ENCODE measurements at regions of chr20 and their contacts with region 1.

Region 1: GRCh38 chr20:58901488-58902402 is 49.2 kb downstream of the GNAS start:
- DNase-seq: no peak
- ATAC-seq: no peak
- H3K4me3 ChIP-seq: no peak overlapping the region
- H3K27ac ChIP-seq: no peak overlapping the region
- H3K4me1 ChIP-seq: peaks cover 16% of the 10 kb centered on the region
- H3K27me3 ChIP-seq: no peaks in the 10 kb centered on the region
- CTCF ChIP-seq: no peak
- POLR2A ChIP-seq: no peak
- RAD21 ChIP-seq: no peak

Region 2: GRCh38 chr20:58890518-58891085 is 11.1 kb before region 1 on chr20:
- CTCF ChIA-PET with region 1: no interaction called
- POLR2A ChIA-PET with region 1: no interaction called
- dilution Hi-C with region 1: no loop called
- in situ Hi-C with region 1: no loop called
- intact Hi-C with region 1: loop called (anchors 1 kb)
- DNase-seq: peak; percentile 77
- ATAC-seq: peak; percentile 64
- H3K4me3 ChIP-seq: peak overlapping the region; percentile 100
- H3K27ac ChIP-seq: peak overlapping the region; percentile 91
- H3K4me1 ChIP-seq: peaks cover 3% of the 10 kb centered on the region
- H3K27me3 ChIP-seq: peaks cover 2% of the 10 kb centered on the region; the same call in 1 of the 2 replicates
- CTCF ChIP-seq: no peak
- POLR2A ChIP-seq: 0 out of 2 replicates have a peak, but pooled peaks have one; percentile 12
- RAD21 ChIP-seq: no peak